ENCODE measurements at regions of chr10 and their contacts with region 1.

Region 1: GRCh38 chr10:103888113-103888841 is 29.7 kb downstream of the STN1 start:
- DNase-seq: peak; percentile 53
- H3K4me3 ChIP-seq: no peak overlapping the region
- H3K27ac ChIP-seq: no peak overlapping the region
- H3K4me1 ChIP-seq: no peaks in the 10 kb centered on the region
- CTCF ChIP-seq: peak; percentile 99

Region 2: DNA sequence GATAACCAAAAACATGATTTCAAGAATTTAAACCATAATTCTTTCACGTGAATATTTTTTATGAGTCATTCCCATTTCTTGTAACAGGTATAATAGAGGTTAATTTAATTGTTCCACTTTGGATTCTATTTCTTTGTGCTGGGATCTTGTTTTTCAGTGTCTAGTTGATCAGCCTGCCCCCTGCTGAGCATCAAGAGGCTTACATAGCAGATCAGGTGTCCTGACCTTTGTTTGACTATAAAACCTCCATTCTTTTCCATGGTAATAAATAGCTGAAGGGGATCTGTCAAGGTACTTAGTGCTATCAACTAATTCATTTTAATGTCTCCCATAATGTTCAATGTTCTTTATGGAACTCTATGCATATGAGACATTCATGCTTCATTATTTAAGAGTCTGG is 192.5 kb after region 1 on chr10:
- CTCF ChIA-PET with region 1: no interaction called
- POLR2A ChIA-PET with region 1: no interaction called
- intact Hi-C with region 1: loop called (anchors 1 kb)
- DNase-seq: peak; percentile 39
- H3K4me3 ChIP-seq: no peak overlapping the region
- H3K27ac ChIP-seq: no peak overlapping the region
- H3K4me1 ChIP-seq: no peaks in the 10 kb centered on the region
- CTCF ChIP-seq: peak; percentile 76

Region 3: DNA sequence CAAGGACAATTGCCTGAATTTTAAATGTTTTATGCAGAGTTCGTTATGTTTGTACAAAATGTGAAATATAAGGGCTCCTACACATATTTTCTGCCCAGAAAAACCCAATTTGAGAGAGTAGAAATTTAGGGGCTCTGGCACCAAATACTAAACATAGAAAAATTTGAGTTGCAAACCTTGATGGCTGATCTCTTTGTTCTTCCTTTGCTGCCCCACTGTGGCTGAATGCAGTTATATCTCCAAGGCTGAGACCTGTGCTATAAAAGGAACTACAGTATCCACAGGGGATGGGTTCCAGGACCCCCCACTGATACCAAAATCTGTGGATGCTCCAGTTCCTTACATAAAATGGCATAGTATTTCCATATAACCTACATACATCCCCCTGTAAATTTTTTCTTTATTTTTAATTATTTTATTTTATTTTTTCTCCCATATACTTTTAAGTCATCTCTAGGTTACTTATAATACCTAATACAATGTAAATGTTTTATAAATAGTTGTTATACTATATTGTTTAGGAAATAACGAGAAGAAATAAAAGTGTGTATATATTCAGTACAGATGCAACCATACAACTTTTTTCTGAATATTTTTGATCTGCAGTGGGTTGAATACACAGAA is 321.4 kb after region 1 on chr10:
- CTCF ChIA-PET with region 1: no interaction called
- POLR2A ChIA-PET with region 1: no interaction called
- intact Hi-C with region 1: loop called (anchors 2 kb)
- DNase-seq: peak; percentile 31
- H3K4me3 ChIP-seq: no peak overlapping the region
- H3K27ac ChIP-seq: no peak overlapping the region
- H3K4me1 ChIP-seq: no peaks in the 10 kb centered on the region
- CTCF ChIP-seq: peak; percentile 79

Measured in OCI-LY7 (cell line).